Spleen (tissue), 13 donors: ENCODE measurements at regions of chr19 and their contacts with region 1.

Region 1: DNA sequence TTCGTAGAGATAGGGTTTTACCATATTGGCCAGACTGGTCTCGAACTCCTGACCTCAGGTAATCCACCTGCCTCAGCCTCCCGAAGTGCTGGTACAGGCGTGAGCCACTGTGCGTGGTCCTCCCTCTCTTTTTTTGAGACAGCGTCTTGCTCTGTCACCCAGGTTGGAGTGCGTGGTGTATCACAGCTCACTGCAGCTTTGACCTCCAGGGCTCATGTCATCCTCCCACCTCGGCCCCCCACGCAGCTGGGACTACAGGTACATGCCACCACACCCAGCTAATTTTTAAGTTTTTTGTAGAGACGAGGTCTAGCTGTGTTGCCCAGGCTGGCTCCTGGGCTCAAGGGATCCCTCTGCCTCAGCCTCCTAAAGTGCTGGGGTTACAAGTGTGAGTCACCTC is 18.2 kb downstream of the ZSCAN18 start:
- DNase-seq: no peak
- H3K4me3 ChIP-seq: no peak overlapping the region
- H3K27ac ChIP-seq: no peak overlapping the region
- H3K4me1 ChIP-seq: no peaks in the 10 kb centered on the region
- H3K27me3 ChIP-seq: no peaks in the 10 kb centered on the region
- CTCF ChIP-seq: no peak
- POLR2A ChIP-seq: no peak

Region 2: DNA sequence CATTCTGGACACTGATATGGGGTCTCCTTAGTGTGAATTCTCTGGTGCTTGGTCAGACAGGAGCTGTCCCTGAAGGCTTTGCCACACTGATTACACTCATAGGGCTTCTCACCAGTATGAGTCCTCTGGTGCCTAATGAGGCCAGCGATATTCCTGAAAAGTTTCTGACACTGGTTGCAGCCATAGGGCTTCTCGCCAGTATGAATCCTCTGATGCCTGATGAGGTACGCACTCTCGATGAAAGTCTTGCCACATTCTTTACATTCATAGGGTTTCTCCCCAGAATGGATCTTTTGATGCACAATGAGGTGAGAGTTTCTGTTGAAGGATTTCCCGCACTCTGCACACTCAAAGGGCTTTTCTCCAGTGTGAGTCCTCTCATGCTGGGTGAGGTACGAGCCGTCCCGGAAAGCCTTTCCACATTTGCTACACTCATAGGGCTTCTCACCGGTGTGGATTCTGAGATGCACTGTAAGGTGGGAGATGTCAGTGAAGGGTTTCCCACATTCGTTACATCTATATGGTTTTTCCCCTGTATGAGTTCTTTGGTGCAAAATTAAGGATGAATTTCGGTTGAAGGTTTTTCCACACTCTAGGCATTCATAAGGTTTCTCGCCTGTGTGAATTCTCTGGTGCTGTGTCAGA is 48.4 kb after region 1 on chr19:
- intact Hi-C with region 1: loop called (anchors 10 kb)
- DNase-seq: no peak
- H3K4me3 ChIP-seq: peak overlapping the region in 1 of 8 donors; percentile 47
- H3K27ac ChIP-seq: no peak overlapping the region
- H3K4me1 ChIP-seq: no peaks in the 10 kb centered on the region
- H3K27me3 ChIP-seq: no peaks in the 10 kb centered on the region
- CTCF ChIP-seq: no peak
- POLR2A ChIP-seq: no peak